Activated CD4-positive, alpha-beta T cell treated with anti-CD3 and anti-CD28 coated beads, Interleukin-2, amount 10 ng/mL, durations not matched to agents 7 days and 5 days (primary cell): ENCODE measurements at regions of chr14 and their contacts with region 1.

Region 1: GRCh38 chr14:105168979-105169507 is 467 bp upstream of the JAG2 start:
- DNase-seq: peak; percentile 36
- H3K4me3 Mint-ChIP-seq: peak overlapping the region; percentile 49
- H3K27ac Mint-ChIP-seq: no peak overlapping the region
- H3K4me1 Mint-ChIP-seq: peaks cover 19% of the 10 kb centered on the region
- H3K27me3 Mint-ChIP-seq: peaks cover 15% of the 10 kb centered on the region

Region 2: DNA sequence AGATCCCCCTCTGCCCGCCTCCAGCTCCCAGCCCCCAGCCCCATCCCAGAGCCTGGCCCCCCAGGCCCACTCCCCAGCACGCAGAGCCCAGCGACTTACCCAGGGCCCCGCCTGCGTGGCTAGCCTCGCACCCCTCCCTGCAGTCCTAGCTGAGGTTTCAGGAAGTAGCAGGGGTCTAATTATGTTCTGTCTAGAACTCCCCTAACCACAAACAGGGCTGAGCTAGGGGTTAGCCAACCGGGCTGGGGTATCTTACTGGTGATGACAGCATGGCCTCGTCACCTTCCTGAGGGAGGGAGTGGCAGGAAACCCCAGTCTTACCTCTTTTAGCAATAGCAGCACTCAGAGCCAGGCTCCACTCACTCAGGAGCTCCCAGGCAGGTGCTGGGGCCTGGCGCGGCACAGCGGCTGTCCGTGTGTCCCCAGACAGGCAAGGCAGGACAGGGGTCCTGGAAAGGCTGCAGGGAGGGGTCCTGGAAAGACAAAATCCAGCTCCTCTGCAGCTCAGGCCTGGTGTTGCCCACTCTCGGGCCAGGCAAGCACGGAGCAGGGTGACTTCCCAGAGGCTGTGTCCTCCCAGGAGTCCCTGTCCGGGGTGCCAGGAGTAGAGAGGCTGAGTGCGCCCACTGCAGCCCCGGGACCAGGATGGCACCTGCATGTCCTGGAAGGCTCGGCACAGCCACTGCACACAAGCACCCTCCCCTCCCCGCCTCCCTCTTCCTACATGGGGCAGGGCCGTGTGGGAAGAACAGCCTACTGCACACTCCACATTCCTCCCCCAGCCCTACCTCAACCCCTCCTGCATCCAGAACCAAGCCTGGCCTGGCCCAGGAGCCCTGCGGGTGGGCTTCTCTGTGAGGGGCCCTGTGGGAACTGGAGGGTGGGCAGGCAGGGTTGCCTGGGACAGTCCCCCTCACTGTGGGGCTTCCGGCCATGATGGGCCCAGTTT is 103.5 kb before region 1 on chr14 and contains the start of gene GPR132:
- CTCF ChIA-PET with region 1: no interaction called
- POLR2A ChIA-PET with region 1: no interaction called
- DNase-seq: peak; percentile 97
- H3K4me3 Mint-ChIP-seq: peak within 1 kb of the TSS; percentile 80
- H3K27ac Mint-ChIP-seq: peak within 1 kb of the TSS; percentile 94
- H3K4me1 Mint-ChIP-seq: peaks cover 73% of the 10 kb centered on the region
- H3K27me3 Mint-ChIP-seq: no peaks in the 10 kb centered on the region
- total RNA-seq, gene GPR132: 44.2 to 46.6 TPM

Region 3: GRCh38 chr14:105146176-105146975 is 22.7 kb before region 1 on chr14:
- CTCF ChIA-PET with region 1: no interaction called
- POLR2A ChIA-PET with region 1: no interaction called
- DNase-seq: no peak
- H3K4me3 Mint-ChIP-seq: no peak overlapping the region
- H3K27ac Mint-ChIP-seq: no peak overlapping the region
- H3K4me1 Mint-ChIP-seq: no peaks in the 10 kb centered on the region
- H3K27me3 Mint-ChIP-seq: no peaks in the 10 kb centered on the region

Region 4: DNA sequence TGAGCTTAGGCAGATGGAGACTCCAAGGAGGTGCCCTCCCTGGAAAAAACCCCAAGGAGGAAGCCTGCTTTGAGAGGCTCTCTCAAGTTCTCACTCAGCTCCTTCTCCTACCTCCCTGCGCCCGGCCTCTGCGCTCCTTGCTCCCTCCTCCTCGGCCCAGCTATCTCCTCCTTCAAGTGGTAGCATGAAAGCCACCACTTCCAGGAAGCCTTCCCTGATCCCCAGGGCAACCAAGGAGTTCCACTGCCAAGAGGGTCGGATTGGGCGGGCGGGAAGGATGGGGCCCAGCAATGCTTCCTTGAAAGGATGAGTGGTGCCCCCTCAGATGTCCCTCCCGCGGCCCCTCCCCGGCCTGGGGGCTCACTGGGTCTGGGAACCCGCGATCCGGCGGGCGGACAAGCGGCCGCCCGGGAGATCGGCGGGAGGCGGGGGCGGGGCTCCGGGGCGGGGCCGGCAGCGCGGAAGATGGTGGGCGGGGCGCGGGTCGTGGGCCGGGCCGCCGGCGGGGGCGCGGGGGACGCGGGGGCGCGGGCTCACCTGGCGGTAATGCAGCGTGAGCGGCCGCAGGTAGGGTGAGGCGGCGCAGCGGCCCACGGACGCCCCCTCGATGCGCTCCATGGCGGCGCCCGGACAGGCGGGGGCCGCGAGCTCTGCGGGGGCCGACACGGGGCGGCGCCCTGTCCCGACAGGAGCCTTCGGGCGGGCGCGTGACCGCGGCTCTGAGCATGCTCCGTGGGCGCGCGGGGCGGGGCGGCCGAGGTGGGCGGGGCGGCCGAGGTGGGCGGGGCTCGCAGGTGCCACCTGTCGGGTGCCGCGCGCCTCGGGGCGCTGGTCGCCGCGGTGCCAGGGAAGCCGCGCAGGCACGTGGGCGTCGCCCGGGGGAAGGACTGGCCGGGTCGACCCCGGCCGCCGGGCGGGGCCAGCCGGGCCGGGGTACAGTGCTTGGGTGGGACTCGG is 11.8 kb after region 1 on chr14 and contains the start of gene NUDT14:
- CTCF ChIA-PET with region 1: interaction called, 22 read pairs
- POLR2A ChIA-PET with region 1: no interaction called
- DNase-seq: peak; percentile 80
- H3K4me3 Mint-ChIP-seq: peak within 1 kb of the TSS; percentile 76
- H3K27ac Mint-ChIP-seq: peak within 1 kb of the TSS; percentile 13
- H3K4me1 Mint-ChIP-seq: peaks cover 25% of the 10 kb centered on the region
- H3K27me3 Mint-ChIP-seq: peaks cover 6% of the 10 kb centered on the region
- total RNA-seq, gene NUDT14: 18.3 to 21.4 TPM